H1 (cell line): ENCODE measurements at regions of chr5 and their contacts with region 1.

Region 1: GRCh38 chr5:38193015-38193581 is 65.3 kb upstream of the EGFLAM start:
- DNase-seq: peak; percentile 36 to 83
- H3K4me3 ChIP-seq: no peak overlapping the region
- H3K27ac ChIP-seq: no peak overlapping the region
- H3K4me1 ChIP-seq: no peaks in the 10 kb centered on the region
- H3K27me3 ChIP-seq: no peaks in the 10 kb centered on the region
- CTCF ChIP-seq: peak; percentile 90 to 97 (median 94)
- EP300 ChIP-seq: no peak
- POLR2A ChIP-seq: no peak
- RAD21 ChIP-seq: peak; percentile 99

Region 2: GRCh38 chr5:37412515-37413277 is 780.4 kb before region 1 on chr5:
- CTCF ChIA-PET with region 1: interaction called, 20 read pairs
- POLR2A ChIA-PET with region 1: no interaction called
- DNase-seq: peak in 1 of 2 experiments; percentile 23
- H3K4me3 ChIP-seq: no peak overlapping the region
- H3K27ac ChIP-seq: no peak overlapping the region
- H3K4me1 ChIP-seq: no peaks in the 10 kb centered on the region
- H3K27me3 ChIP-seq: no peaks in the 10 kb centered on the region
- CTCF ChIP-seq: peak in 2 of 3 experiments; percentile 91 to 98; a peak in 3 of 4 replicates
- EP300 ChIP-seq: no peak
- POLR2A ChIP-seq: no peak
- RAD21 ChIP-seq: peak; percentile 92 to 93

Region 3: DNA sequence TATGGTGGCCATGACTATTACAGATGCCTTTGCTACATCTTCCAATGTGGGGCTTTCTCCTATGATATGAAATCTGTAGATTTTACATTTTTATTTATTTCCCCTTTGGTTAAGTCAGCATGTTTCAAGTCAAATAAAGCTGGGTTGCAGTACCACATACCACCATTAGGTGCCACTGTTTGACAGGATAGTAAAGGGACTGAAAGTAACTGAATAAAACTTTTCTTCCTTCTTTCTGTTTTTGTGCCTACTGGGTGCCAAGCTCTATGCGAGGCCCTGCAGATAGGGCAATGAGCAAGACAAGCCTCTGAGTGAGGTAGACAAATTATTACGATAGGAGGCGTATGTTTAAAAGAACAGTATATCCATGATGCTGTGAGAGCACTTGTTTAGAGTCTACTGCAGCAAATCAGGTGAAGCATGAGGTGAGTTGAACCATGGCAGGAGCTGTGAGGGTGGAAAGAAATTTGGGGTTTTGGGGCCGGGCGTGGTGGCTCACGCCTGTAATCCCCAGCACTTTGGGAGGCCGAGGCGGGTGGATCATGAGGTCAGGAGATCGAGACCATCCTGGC is 418.1 kb before region 1 on chr5:
- CTCF ChIA-PET with region 1: interaction called, 42 read pairs
- POLR2A ChIA-PET with region 1: no interaction called
- DNase-seq: peak in 1 of 2 experiments; percentile 80
- H3K4me3 ChIP-seq: no peak overlapping the region
- H3K27ac ChIP-seq: no peak overlapping the region
- H3K4me1 ChIP-seq: no peaks in the 10 kb centered on the region
- H3K27me3 ChIP-seq: no peaks in the 10 kb centered on the region
- CTCF ChIP-seq: peak in 2 of 3 experiments; percentile 32 to 68; a peak in 2 of 4 replicates
- EP300 ChIP-seq: no peak
- POLR2A ChIP-seq: no peak
- RAD21 ChIP-seq: peak; percentile 69 to 70

Region 4: GRCh38 chr5:37831821-37832534 is 361.1 kb before region 1 on chr5:
- CTCF ChIA-PET with region 1: interaction called, 36 read pairs
- POLR2A ChIA-PET with region 1: no interaction called
- DNase-seq: no peak
- H3K4me3 ChIP-seq: no peak overlapping the region
- H3K27ac ChIP-seq: no peak overlapping the region
- H3K4me1 ChIP-seq: peaks cover 0 to 15% (median 10%) of the 10 kb centered on the region in 4 experiments; a peak in 6 of 7 replicates
- H3K27me3 ChIP-seq: peaks cover 23 to 43% (median 41%) of the 10 kb centered on the region in 4 experiments
- CTCF ChIP-seq: no peak
- EP300 ChIP-seq: no peak
- POLR2A ChIP-seq: no peak
- RAD21 ChIP-seq: no peak

Region 5: GRCh38 chr5:37952021-37952721 is 240.9 kb before region 1 on chr5:
- CTCF ChIA-PET with region 1: interaction called, 23 read pairs
- POLR2A ChIA-PET with region 1: no interaction called
- DNase-seq: no peak
- H3K4me3 ChIP-seq: no peak overlapping the region
- H3K27ac ChIP-seq: no peak overlapping the region
- H3K4me1 ChIP-seq: no peaks in the 10 kb centered on the region
- H3K27me3 ChIP-seq: no peaks in the 10 kb centered on the region
- CTCF ChIP-seq: peak; percentile 38 to 41 (median 39)
- EP300 ChIP-seq: no peak
- POLR2A ChIP-seq: no peak
- RAD21 ChIP-seq: peak; percentile 58 to 70

Region 6: GRCh38 chr5:38208782-38209378 is 15.8 kb after region 1 on chr5:
- CTCF ChIA-PET with region 1: interaction called, 12 read pairs
- POLR2A ChIA-PET with region 1: no interaction called
- DNase-seq: no peak
- H3K4me3 ChIP-seq: no peak overlapping the region
- H3K27ac ChIP-seq: no peak overlapping the region
- H3K4me1 ChIP-seq: no peaks in the 10 kb centered on the region; a peak in 1 of 7 replicates
- H3K27me3 ChIP-seq: no peaks in the 10 kb centered on the region
- CTCF ChIP-seq: peak; percentile 14 to 76 (median 63)
- EP300 ChIP-seq: no peak
- POLR2A ChIP-seq: no peak
- RAD21 ChIP-seq: peak; percentile 90 to 94